PC-3 (cell line): ENCODE measurements at regions of chr1 and their contacts with region 1.

Region 1: GRCh38 chr1:159891275-159892157 is 8.4 kb downstream of the CFAP45 start:
- DNase-seq: peak; percentile 97
- ATAC-seq: peak; percentile 74
- H3K4me3 ChIP-seq: no peak overlapping the region
- H3K27ac ChIP-seq: peak overlapping the region; percentile 19; the same call in 1 of the 2 replicates
- H3K4me1 ChIP-seq: peaks cover 27% of the 10 kb centered on the region
- H3K27me3 ChIP-seq: no peaks in the 10 kb centered on the region
- CTCF ChIP-seq: peak; percentile 100

Region 2: DNA sequence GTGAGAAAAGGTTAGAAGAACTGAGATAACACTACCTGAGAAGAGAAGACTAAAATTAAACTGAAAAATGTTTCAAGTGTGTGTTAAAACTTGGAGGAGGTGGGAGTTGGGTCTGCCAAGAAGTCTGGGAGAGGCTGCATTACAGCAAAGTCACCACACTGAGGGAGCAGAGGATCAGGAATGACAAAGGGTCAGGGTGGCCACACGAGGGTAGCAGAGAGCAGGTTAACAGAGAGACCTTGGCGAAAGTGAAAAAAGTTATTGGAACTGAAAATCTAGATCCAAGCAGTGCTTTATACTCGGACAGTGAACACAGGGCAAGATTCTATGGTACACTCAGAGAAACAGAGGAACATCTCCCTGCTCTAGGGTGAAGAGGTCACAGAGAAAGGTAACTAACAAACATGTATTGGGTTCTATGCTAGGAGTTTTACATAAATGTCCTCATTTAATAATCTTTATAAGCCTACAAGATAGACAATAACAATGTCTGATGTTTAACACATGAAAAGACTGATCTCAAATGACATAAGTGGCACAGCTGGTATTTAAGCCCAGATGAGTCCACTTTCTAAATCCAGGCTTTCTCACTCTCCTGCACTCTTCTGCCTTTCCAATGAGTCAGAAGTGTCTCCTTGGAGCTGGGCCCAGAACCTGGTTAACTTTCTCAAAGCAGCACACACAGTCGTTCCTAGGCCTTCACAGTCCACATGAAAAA is 730.4 kb before region 1 on chr1:
- CTCF ChIA-PET with region 1: interaction called, 3 read pairs
- POLR2A ChIA-PET with region 1: no interaction called
- intact Hi-C with region 1: loop called (anchors 1 kb)
- DNase-seq: peak; percentile 89
- ATAC-seq: peak; percentile 95
- H3K4me3 ChIP-seq: no peak overlapping the region
- H3K27ac ChIP-seq: no peak overlapping the region
- H3K4me1 ChIP-seq: peaks cover 8% of the 10 kb centered on the region
- H3K27me3 ChIP-seq: peaks cover 50% of the 10 kb centered on the region
- CTCF ChIP-seq: peak; percentile 100

Region 3: DNA sequence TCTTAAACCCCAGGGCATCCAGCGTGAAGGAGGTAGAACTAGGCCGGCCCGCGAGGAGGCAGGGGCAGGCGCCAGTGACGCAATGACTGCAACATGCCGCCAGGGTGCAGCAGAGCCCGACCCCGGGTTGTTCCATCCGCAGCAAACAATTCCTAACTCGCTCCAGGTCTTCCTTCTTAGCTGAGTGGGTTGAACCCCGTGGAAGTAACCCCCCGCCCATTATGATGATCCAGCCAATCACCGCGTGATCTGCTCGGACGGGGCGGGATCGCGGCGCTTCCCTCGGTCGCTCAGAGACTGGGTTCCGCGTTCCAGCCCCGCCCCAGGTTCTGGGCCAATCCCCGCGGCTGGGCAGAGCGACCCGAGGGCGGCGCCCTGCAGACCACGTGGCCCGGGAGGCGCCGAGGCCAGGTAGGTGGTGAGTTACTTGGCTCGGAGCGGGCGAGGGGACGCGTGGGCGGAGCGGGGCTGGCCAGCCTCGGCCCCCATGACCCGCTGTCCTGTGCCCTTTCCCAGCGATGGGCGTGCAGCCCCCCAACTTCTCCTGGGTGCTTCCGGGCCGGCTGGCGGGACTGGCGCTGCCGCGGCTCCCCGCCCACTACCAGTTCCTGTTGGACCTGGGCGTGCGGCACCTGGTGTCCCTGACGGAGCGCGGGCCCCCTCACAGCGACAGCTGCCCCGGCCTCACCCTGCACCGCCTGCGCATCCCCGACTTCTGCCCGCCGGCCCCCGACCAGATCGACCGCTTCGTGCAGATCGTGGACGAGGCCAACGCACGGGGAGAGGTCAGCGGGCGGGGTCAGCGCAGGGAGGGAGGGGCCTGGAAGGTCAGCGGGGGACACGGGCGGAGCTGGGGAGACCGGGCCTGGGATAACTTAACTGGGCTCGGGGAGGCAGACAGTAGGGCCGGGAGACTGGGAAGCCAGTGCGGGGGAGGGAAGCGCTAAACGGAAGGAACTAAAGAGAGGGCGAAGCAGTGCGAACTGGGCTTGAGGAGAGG is 110.6 kb before region 1 on chr1 and contains the start of gene DUSP23:
- CTCF ChIA-PET with region 1: interaction called, 4 read pairs
- POLR2A ChIA-PET with region 1: no interaction called
- intact Hi-C with region 1: loop called (anchors 1 kb)
- DNase-seq: peak; percentile 95
- ATAC-seq: peak; percentile 95
- H3K4me3 ChIP-seq: peak within 1 kb of the TSS; percentile 46
- H3K27ac ChIP-seq: no peak within 1 kb of the TSS
- H3K4me1 ChIP-seq: peaks cover 19% of the 10 kb centered on the region
- H3K27me3 ChIP-seq: no peaks in the 10 kb centered on the region
- CTCF ChIP-seq: peak; percentile 90
- total RNA-seq, gene DUSP23: 20.4 and 27.6 TPM in 2 replicates

Region 4: DNA sequence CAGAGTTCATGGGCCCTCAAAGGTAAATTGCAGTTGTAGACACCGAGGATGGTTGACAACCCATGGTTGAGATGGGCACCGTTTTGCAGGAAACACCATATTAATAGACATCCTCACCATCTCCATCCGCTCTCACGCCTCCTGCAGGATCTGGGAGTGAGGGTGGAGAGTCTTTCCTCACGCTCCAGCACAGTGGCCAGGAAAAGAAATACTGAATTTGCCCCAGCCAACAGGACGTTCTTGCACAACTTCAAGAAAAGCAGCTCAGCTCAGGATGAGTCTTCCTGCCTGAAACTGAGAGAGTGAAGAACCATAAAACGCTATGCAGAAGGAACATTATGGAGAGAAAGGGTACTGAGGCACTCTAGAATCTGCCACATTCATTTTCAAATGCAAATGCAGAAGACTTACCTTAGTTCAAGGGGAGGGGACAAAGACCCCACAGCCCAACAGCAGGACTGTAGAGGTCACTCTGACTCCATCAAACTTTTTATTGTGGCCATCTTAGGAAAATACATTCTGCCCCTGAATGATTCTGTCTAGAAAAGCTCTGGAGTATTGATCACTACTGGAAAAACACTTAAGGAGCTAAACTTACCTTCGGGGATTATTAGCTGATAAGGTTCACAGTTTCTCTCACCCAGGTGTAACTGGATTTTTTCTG is 55.5 kb before region 1 on chr1:
- CTCF ChIA-PET with region 1: interaction called, 6 read pairs
- POLR2A ChIA-PET with region 1: no interaction called
- intact Hi-C with region 1: loop called (anchors 1 kb)
- DNase-seq: no peak
- ATAC-seq: no peak
- H3K4me3 ChIP-seq: no peak overlapping the region
- H3K27ac ChIP-seq: no peak overlapping the region
- H3K4me1 ChIP-seq: peaks cover 23% of the 10 kb centered on the region
- H3K27me3 ChIP-seq: no peaks in the 10 kb centered on the region
- CTCF ChIP-seq: peak; percentile 47

Region 5: GRCh38 chr1:159924981-159925712 is 33.6 kb after region 1 on chr1 and contains the start of gene TAGLN2:
- CTCF ChIA-PET with region 1: interaction called, 10 read pairs
- POLR2A ChIA-PET with region 1: interaction called, 10 read pairs
- intact Hi-C with region 1: loop called (anchors 2 kb)
- DNase-seq: peak; percentile 97
- ATAC-seq: peak; percentile 75
- H3K4me3 ChIP-seq: peak within 1 kb of the TSS; percentile 96
- H3K27ac ChIP-seq: peak within 1 kb of the TSS; percentile 99
- H3K4me1 ChIP-seq: peaks cover 45% of the 10 kb centered on the region
- H3K27me3 ChIP-seq: no peaks in the 10 kb centered on the region
- CTCF ChIP-seq: no peak
- total RNA-seq, gene TAGLN2: 1,281 and 1,584 TPM in 2 replicates

Region 6: GRCh38 chr1:159945483-159946241 is 54.1 kb after region 1 on chr1 and contains the start of gene IGSF9:
- CTCF ChIA-PET with region 1: interaction called, 10 read pairs
- POLR2A ChIA-PET with region 1: no interaction called
- intact Hi-C with region 1: loop called (anchors 1 kb)
- DNase-seq: peak; percentile 99
- ATAC-seq: peak; percentile 92
- H3K4me3 ChIP-seq: peak within 1 kb of the TSS; percentile 84
- H3K27ac ChIP-seq: peak within 1 kb of the TSS; percentile 83
- H3K4me1 ChIP-seq: peaks cover 42% of the 10 kb centered on the region
- H3K27me3 ChIP-seq: no peaks in the 10 kb centered on the region
- CTCF ChIP-seq: peak; percentile 82
- total RNA-seq, gene IGSF9: 15.6 and 19.9 TPM in 2 replicates